Spleen (tissue), 13 donors: ENCODE measurements at regions of chr1 and their contacts with region 1.

Region 1: GRCh38 chr1:89358287-89358893 is 5.5 kb upstream of the GBP6 start:
- DNase-seq: peak; percentile 86
- H3K4me3 ChIP-seq: no peak overlapping the region
- H3K27ac ChIP-seq: peak overlapping the region in 4 of 8 donors; percentile 0 to 60 (median 10)
- H3K4me1 ChIP-seq: peaks cover 8 to 35% (median 10%) of the 10 kb centered on the region in 6 donors
- H3K27me3 ChIP-seq: no peaks in the 10 kb centered on the region
- CTCF ChIP-seq: peak; percentile 70 to 93 (median 84)
- POLR2A ChIP-seq: no peak

Region 2: GRCh38 chr1:88998716-88999115 is 359.7 kb before region 1 on chr1:
- intact Hi-C with region 1: loop called (anchors 5 kb)
- DNase-seq: no peak
- H3K4me3 ChIP-seq: no peak overlapping the region
- H3K27ac ChIP-seq: no peak overlapping the region
- H3K4me1 ChIP-seq: peaks cover 0 to 34% (median 15%) of the 10 kb centered on the region in 6 donors
- H3K27me3 ChIP-seq: no peaks in the 10 kb centered on the region
- CTCF ChIP-seq: peak in 10 of 11 experiments; percentile 21 to 76 (median 62)
- POLR2A ChIP-seq: no peak

Region 3: DNA sequence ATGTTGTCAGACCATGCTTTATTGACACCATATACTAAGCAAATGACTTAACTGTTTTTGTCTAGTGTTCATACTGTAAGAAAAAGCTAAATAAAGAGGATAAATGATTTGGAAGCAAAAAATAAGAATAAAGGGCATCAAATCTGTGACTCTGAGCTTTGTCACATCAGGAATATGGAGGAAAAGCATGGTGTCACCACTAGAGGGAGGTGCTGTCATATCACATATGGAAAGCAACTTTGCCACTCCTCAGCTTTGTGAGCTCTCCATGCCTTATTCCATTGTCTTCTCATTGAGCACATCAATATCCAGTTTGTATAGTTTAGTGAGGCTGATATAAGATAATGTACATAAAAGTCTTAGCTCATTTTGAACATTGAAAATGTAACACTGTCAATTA is 272.6 kb before region 1 on chr1:
- intact Hi-C with region 1: no loop called
- DNase-seq: no peak
- H3K4me3 ChIP-seq: no peak overlapping the region
- H3K27ac ChIP-seq: no peak overlapping the region
- H3K4me1 ChIP-seq: peaks cover 0 to 10% (median 6%) of the 10 kb centered on the region in 6 donors
- H3K27me3 ChIP-seq: no peaks in the 10 kb centered on the region
- CTCF ChIP-seq: peak in 7 of 11 experiments; percentile 43 to 76 (median 69)
- POLR2A ChIP-seq: no peak

Region 4: DNA sequence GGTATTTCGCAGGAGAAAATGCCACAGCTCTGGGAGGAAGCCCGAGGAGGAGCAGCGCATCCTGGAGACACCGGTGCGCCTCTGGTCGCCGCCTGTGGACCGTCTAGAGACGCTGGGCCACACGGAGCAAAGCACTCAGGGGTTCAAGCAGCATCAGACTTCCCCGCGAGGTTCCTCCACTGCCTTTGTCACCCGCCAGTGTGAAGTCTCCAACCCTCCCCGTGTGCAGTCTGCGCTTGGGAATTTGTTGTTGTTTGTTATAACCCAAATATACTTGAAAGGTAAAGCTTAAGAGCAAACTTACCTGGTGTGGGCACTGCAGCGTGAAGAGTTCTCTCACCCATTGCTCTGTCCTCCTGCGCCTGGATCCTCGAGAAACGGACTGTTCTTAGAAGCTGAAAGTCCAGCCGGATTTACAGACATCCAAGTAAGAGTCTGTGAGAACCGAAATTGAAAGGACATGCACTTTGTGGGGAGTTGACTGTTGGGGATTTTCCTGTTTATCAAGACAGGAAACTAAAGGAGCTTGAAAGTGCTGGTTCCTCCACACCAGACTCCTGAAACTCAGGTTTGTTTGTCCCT is 159.8 kb before region 1 on chr1 and contains the start of gene GBP4:
- intact Hi-C with region 1: loop called (anchors 10 kb)
- DNase-seq: peak; percentile 91
- H3K4me3 ChIP-seq: peak within 1 kb of the TSS; percentile 39 to 80 (median 64)
- H3K27ac ChIP-seq: peak within 1 kb of the TSS; percentile 81 to 91 (median 90)
- H3K4me1 ChIP-seq: peaks cover 16 to 83% (median 58%) of the 10 kb centered on the region in 6 donors
- H3K27me3 ChIP-seq: no peaks in the 10 kb centered on the region
- CTCF ChIP-seq: no peak
- POLR2A ChIP-seq: peak in 1 of 3 donors; percentile 74
- total RNA-seq, gene GBP4: 28.3 to 63.5 (median 40.0) TPM

Region 5: GRCh38 chr1:89444791-89445190 is 86.4 kb after region 1 on chr1:
- intact Hi-C with region 1: loop called (anchors 10 kb)
- DNase-seq: no peak
- H3K4me3 ChIP-seq: no peak overlapping the region
- H3K27ac ChIP-seq: no peak overlapping the region
- H3K4me1 ChIP-seq: no peaks in the 10 kb centered on the region
- H3K27me3 ChIP-seq: no peaks in the 10 kb centered on the region
- CTCF ChIP-seq: no peak
- POLR2A ChIP-seq: no peak

Region 6: DNA sequence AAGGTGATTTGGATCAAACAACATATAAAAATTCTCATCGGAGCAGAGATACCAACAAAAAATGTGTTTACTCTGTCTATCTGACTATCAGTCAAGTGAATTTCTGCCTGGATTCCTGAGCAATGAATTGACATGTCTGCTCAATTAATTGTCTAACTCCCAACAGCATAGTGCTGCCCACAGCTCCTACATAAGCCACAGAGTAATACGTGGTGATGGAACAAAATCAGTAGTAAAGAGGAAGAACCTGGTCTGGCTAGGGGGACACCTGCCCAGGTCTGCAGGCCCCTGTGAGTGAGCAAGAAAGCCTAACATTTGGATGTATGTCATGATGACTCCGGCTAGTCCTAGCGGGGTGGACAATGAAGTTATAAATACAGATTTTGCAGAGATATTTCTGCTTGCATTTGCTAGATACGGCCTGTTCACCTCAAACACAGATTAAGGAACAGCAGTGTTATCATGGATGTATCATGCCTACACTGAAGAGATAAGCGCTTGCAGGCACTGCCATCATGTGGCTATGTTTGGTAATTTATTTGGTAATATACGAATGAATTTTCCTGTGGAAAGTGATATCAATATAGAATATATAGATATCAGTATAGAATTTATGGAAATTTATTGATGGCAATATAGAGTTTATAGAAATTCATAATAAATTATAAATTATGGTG is 96.6 kb after region 1 on chr1:
- intact Hi-C with region 1: no loop called
- DNase-seq: no peak
- H3K4me3 ChIP-seq: no peak overlapping the region
- H3K27ac ChIP-seq: no peak overlapping the region
- H3K4me1 ChIP-seq: peaks cover 0 to 5% (median 0%) of the 10 kb centered on the region in 6 donors
- H3K27me3 ChIP-seq: no peaks in the 10 kb centered on the region
- CTCF ChIP-seq: peak; percentile 17 to 72 (median 61)
- POLR2A ChIP-seq: no peak